Common myeloid progenitor, CD34-positive (primary cell): ENCODE measurements at regions of chr1 and their contacts with region 1.

Region 1: DNA sequence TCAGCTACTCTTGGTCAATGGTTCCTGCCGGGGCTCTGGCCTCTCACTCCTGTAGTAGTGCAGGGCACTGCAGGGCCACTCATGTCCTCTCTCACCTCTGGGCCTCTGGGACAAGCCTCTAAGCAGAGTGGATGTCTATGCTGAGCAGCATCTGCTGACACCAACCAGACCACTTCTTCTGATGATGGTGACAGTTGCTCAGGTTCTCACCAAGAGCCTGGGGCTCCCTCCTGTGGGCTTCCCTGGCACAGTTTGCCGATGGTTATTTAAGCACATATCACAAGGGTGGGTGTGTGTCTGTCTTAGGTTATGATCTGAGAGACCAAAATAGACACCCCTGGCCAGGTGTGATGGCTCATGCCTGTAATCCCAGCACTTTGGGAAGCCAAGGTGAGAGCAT is 17.4 kb upstream of the GPR137B start:
- DNase-seq: peak; percentile 29 to 55 (median 51)
- H3K4me3 ChIP-seq: no peak overlapping the region
- H3K27ac ChIP-seq: no peak overlapping the region
- H3K4me1 ChIP-seq: peaks cover 0 to 11% (median 6%) of the 10 kb centered on the region in 4 experiments
- H3K27me3 ChIP-seq: peaks cover 0 to 10% (median 3%) of the 10 kb centered on the region in 5 experiments

Region 2: GRCh38 chr1:236058141-236058934 is 66.6 kb before region 1 on chr1:
- CTCF ChIA-PET with region 1: no interaction called
- POLR2A ChIA-PET with region 1: no interaction called
- DNase-seq: no peak
- H3K4me3 ChIP-seq: no peak overlapping the region
- H3K27ac ChIP-seq: no peak overlapping the region
- H3K4me1 ChIP-seq: peaks cover 0 to 2% (median 0%) of the 10 kb centered on the region in 4 experiments
- H3K27me3 ChIP-seq: peaks cover 2 to 12% (median 4%) of the 10 kb centered on the region in 5 experiments

Region 3: DNA sequence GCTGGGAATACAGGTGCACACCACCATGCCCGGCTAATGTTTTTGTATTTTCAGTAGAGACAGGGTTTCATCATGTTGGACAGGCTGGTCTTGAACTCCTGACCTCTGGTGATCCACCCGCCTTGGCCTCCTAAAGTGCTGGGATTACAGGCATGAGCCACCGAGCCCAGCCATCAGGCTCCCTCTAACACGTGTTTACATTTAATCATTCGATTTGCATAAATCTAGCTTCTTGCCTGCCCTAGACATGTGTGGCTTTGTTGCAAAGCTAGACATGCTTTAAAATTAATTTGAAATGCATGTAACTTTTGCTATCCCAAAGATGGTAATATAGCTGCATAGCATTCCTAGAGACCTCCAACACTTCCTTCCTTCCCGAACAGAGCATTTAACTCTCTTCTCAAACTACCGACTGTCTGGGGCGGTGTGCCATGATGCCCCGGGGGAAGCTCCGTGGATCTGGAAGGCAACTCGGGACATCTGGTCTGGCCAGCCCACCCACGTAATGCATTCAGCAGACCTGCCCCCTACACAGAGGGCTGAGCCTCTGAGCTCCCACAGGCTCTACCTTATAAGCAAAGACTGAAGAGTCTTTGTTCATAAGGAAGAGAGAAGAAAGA is 25.5 kb before region 1 on chr1:
- CTCF ChIA-PET with region 1: no interaction called
- POLR2A ChIA-PET with region 1: no interaction called
- DNase-seq: no peak
- H3K4me3 ChIP-seq: no peak overlapping the region
- H3K27ac ChIP-seq: no peak overlapping the region
- H3K4me1 ChIP-seq: peaks cover 0 to 4% (median 0%) of the 10 kb centered on the region in 4 experiments
- H3K27me3 ChIP-seq: no peaks in the 10 kb centered on the region

Region 4: GRCh38 chr1:236113324-236114032 is 11.5 kb before region 1 on chr1:
- CTCF ChIA-PET with region 1: interaction called, 14 read pairs
- POLR2A ChIA-PET with region 1: no interaction called
- DNase-seq: no peak
- H3K4me3 ChIP-seq: no peak overlapping the region
- H3K27ac ChIP-seq: no peak overlapping the region
- H3K4me1 ChIP-seq: no peaks in the 10 kb centered on the region
- H3K27me3 ChIP-seq: peaks cover 0 to 2% (median 0%) of the 10 kb centered on the region in 5 experiments

Region 5: GRCh38 chr1:236206548-236206947 is 81.6 kb after region 1 on chr1:
- CTCF ChIA-PET with region 1: no interaction called
- POLR2A ChIA-PET with region 1: no interaction called
- DNase-seq: no peak
- H3K4me3 ChIP-seq: no peak overlapping the region
- H3K27ac ChIP-seq: no peak overlapping the region
- H3K4me1 ChIP-seq: no peaks in the 10 kb centered on the region
- H3K27me3 ChIP-seq: no peaks in the 10 kb centered on the region

Region 6: DNA sequence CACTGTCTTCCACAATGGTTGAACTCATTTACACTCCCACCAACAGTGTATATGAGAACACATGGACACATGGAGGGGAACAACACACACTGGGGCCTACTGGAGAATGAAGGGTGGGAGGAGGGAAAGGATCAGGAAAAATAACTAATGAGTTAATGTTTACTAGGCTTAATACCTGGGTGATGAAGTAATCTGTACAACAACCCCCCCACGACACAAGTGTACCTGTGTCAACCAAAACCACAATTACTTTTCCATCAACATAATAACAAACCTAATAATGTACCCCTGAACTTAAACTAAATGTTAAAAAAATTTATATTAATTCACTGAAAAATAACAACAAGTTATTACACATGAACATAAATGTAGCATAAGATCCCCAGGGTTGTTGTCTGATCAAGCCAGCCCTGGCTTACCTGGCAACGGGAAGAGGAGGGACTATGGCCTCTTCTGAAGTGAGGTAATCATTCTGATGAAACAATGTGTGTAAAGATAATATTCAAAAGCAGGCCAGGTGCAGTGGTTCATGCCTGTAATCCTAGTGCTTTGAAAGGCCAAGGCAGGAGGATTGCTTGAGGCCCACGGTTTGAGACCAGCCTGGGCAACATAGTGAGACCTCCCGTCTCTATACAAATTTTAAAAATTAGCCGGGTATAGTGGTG is 520.2 kb after region 1 on chr1:
- CTCF ChIA-PET with region 1: no interaction called
- POLR2A ChIA-PET with region 1: no interaction called
- DNase-seq: no peak
- H3K4me3 ChIP-seq: no peak overlapping the region
- H3K27ac ChIP-seq: no peak overlapping the region
- H3K4me1 ChIP-seq: no peaks in the 10 kb centered on the region
- H3K27me3 ChIP-seq: peaks cover 0 to 3% (median 0%) of the 10 kb centered on the region in 5 experiments